ENCODE measurements at regions of chr2 and their contacts with region 1.

Region 1: GRCh38 chr2:40448468-40449079 is 3.3 kb downstream of the SLC8A1 start:
- DNase-seq: peak; percentile 21
- H3K4me3 ChIP-seq: no peak overlapping the region
- H3K27ac ChIP-seq: no peak overlapping the region
- H3K4me1 ChIP-seq: peaks cover 16% of the 10 kb centered on the region
- H3K27me3 ChIP-seq: no peaks in the 10 kb centered on the region
- CTCF ChIP-seq: peak; percentile 66 to 69

Region 2: GRCh38 chr2:38610851-38611801 is 1837.4 kb before region 1 on chr2:
- CTCF ChIA-PET with region 1: no interaction called
- dilution Hi-C with region 1: no loop called
- in situ Hi-C with region 1: no loop called
- intact Hi-C with region 1: no loop called
- DNase-seq: peak; percentile 78
- H3K4me3 ChIP-seq: no peak overlapping the region
- H3K27ac ChIP-seq: no peak overlapping the region
- H3K4me1 ChIP-seq: peaks cover 22% of the 10 kb centered on the region
- H3K27me3 ChIP-seq: no peaks in the 10 kb centered on the region
- CTCF ChIP-seq: no peak

Region 3: DNA sequence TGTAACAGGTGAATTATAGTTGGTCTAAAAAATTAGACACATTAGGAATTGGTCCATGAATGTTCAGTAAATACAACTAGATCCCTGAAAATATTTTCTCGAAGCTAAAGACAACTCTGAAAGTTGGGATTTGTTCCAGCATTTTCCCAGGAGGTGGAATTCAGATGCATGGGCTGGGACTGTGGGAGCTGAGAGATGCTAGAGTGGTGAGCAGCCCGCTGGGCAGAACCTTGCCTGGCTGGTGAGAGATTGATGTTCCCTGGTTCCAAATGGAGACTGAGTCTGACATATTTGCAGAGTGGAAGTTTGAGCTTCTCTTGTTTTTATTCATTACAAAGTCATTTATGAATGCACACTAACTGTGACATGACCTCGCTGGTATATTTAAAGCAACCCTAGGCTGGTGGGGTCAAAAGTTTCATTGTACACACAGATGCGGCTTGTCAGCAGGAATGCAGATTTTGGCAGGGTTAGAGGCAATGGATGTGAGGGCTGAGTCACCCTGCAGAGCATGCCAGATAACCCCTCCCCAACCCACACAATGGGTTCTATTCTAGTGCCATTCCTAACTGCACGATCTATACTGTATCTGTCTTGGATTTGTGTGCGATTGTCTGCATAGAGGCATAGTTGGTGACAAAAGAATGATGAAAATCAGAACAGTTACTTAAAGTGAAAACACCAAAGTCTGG is 806.4 kb before region 1 on chr2:
- CTCF ChIA-PET with region 1: no interaction called
- dilution Hi-C with region 1: no loop called
- in situ Hi-C with region 1: no loop called
- intact Hi-C with region 1: no loop called
- DNase-seq: peak; percentile 79
- H3K4me3 ChIP-seq: no peak overlapping the region
- H3K27ac ChIP-seq: peak overlapping the region; percentile 49
- H3K4me1 ChIP-seq: peaks cover 13% of the 10 kb centered on the region
- H3K27me3 ChIP-seq: no peaks in the 10 kb centered on the region
- CTCF ChIP-seq: no peak

Region 4: DNA sequence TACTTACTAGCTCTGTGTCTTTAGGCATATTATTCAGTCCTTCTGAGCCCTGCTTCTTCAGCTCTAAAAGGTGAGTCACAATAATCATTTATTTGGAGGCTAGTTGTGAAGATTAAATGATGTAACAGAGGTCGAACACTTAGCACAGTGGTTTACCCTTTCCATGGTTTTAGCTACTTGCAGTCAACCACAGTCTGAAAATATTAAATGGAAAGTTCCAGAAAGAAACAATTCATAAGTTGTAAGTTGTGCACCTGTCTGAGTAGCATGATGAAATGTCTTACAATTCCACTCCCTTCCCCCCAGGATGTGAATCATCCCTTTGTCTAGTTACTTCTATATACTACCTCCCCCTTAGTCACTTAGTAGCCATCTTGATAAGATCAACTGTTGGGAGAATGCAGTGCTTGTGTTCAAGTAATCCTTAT is 451.9 kb before region 1 on chr2:
- CTCF ChIA-PET with region 1: no interaction called
- dilution Hi-C with region 1: no loop called
- in situ Hi-C with region 1: no loop called
- intact Hi-C with region 1: loop called (anchors 10 kb)
- DNase-seq: peak; percentile 96
- H3K4me3 ChIP-seq: no peak overlapping the region
- H3K27ac ChIP-seq: peak overlapping the region; percentile 47
- H3K4me1 ChIP-seq: peaks cover 37% of the 10 kb centered on the region
- H3K27me3 ChIP-seq: no peaks in the 10 kb centered on the region
- CTCF ChIP-seq: no peak

Region 5: GRCh38 chr2:40244675-40245074 is 203.9 kb before region 1 on chr2:
- CTCF ChIA-PET with region 1: interaction called, 8 read pairs
- dilution Hi-C with region 1: no loop called
- in situ Hi-C with region 1: no loop called
- intact Hi-C with region 1: loop called (anchors 1 kb)
- DNase-seq: peak; percentile 46
- H3K4me3 ChIP-seq: no peak overlapping the region
- H3K27ac ChIP-seq: no peak overlapping the region
- H3K4me1 ChIP-seq: peaks cover 8% of the 10 kb centered on the region
- H3K27me3 ChIP-seq: no peaks in the 10 kb centered on the region
- CTCF ChIP-seq: peak; percentile 51 to 80

Region 6: GRCh38 chr2:40281021-40281940 is 167.3 kb before region 1 on chr2:
- CTCF ChIA-PET with region 1: interaction called, 3 read pairs
- dilution Hi-C with region 1: no loop called
- in situ Hi-C with region 1: loop called in 1 of 2 experiments (anchors 25 kb)
- intact Hi-C with region 1: loop called (anchors 1 kb)
- DNase-seq: peak; percentile 91
- H3K4me3 ChIP-seq: no peak overlapping the region
- H3K27ac ChIP-seq: peak overlapping the region; percentile 4
- H3K4me1 ChIP-seq: peaks cover 27% of the 10 kb centered on the region
- H3K27me3 ChIP-seq: no peaks in the 10 kb centered on the region
- CTCF ChIP-seq: no peak

Region 7: GRCh38 chr2:40363631-40364030 is 84.9 kb before region 1 on chr2:
- CTCF ChIA-PET with region 1: no interaction called
- dilution Hi-C with region 1: no loop called
- in situ Hi-C with region 1: no loop called
- intact Hi-C with region 1: loop called (anchors 1 kb)
- DNase-seq: no peak
- H3K4me3 ChIP-seq: no peak overlapping the region
- H3K27ac ChIP-seq: peak overlapping the region; percentile 51
- H3K4me1 ChIP-seq: peaks cover 13% of the 10 kb centered on the region
- H3K27me3 ChIP-seq: no peaks in the 10 kb centered on the region
- CTCF ChIP-seq: no peak

Region 8: GRCh38 chr2:40401896-40402295 is 46.7 kb before region 1 on chr2:
- CTCF ChIA-PET with region 1: interaction called, 4 read pairs
- dilution Hi-C with region 1: no loop called
- in situ Hi-C with region 1: no loop called
- intact Hi-C with region 1: loop called (anchors 2 kb)
- DNase-seq: peak; percentile 90
- H3K4me3 ChIP-seq: peak overlapping the region in 1 of 3 experiments; percentile 15
- H3K27ac ChIP-seq: peak overlapping the region; percentile 88
- H3K4me1 ChIP-seq: peaks cover 47% of the 10 kb centered on the region
- H3K27me3 ChIP-seq: no peaks in the 10 kb centered on the region
- CTCF ChIP-seq: no peak

Measured in mammary epithelial cell (primary cell).